ENCODE measurements at regions of chr1 and their contacts with region 1.

Region 1: DNA sequence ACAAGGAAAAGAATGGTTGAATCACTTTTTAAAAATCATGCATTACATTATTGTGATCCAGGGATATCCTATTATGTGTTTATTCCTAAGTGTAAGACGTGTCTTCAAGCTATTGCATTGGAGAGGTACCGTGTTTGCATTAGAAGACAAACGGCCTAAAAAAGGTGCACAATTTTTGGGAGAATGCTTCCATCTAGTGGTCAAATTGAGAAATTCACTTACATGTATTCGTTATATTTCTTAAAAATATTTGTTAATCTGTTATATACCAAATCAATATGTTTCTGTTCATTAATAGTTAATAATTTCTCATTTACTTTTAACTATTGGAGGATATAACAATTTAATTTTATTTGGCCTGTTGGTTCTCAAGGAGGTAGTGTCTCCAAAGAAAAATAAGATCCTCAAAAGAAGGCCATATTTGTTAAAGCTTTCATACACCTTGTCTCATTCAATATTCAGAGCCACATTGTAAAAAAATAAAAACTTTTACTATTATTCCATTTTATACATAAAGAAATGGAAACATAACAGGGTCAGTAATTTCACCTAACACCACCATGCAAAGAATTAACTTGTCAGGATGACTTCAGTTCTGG is 40.5 kb upstream of the KCTD3 start:
- DNase-seq: no peak
- ATAC-seq: no peak
- H3K4me3 ChIP-seq: no peak overlapping the region
- H3K27ac ChIP-seq: no peak overlapping the region
- H3K4me1 ChIP-seq: no peaks in the 10 kb centered on the region
- H3K27me3 ChIP-seq: no peaks in the 10 kb centered on the region

Region 2: GRCh38 chr1:214632091-214632490 is 894.6 kb before region 1 on chr1:
- intact Hi-C with region 1: loop called in 1 of 2 experiments (anchors 5 kb)
- DNase-seq: no peak
- ATAC-seq: no peak
- H3K4me3 ChIP-seq: no peak overlapping the region
- H3K27ac ChIP-seq: no peak overlapping the region
- H3K4me1 ChIP-seq: no peaks in the 10 kb centered on the region
- H3K27me3 ChIP-seq: no peaks in the 10 kb centered on the region

Region 3: DNA sequence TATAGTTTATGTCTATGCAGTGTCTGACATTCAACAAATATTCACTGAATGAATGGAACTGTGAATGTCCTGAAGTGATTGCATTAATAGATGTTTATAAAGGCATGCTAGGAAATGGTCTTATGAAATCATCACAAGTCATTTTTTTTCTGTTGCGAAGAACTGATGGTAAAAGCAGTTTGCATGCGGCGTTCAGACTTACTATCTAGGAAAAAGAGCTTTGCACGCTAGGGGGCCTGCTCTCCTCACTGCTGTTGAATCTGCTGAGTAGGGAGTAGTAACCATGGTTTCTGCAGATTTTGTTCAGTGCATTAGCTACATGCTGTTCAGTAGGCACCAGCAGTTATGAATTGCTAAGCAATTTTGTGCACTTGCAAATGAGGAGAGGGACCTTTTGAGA is 865.8 kb before region 1 on chr1:
- intact Hi-C with region 1: loop called in 1 of 2 experiments (anchors 5 kb)
- DNase-seq: peak in 1 of 2 donors; percentile 48
- ATAC-seq: no peak
- H3K4me3 ChIP-seq: no peak overlapping the region
- H3K27ac ChIP-seq: no peak overlapping the region
- H3K4me1 ChIP-seq: no peaks in the 10 kb centered on the region
- H3K27me3 ChIP-seq: no peaks in the 10 kb centered on the region